H1 (cell line): ENCODE measurements at regions of chr22 and their contacts with region 1.

Region 1: GRCh38 chr22:36028646-36029405 is at the start of gene RBFOX2:
- DNase-seq: peak; percentile 84 to 99
- H3K4me3 ChIP-seq: peak within 1 kb of the TSS; percentile 87 to 95 (median 92)
- H3K27ac ChIP-seq: peak within 1 kb of the TSS; percentile 88; the same call in 1 of the 2 replicates
- H3K4me1 ChIP-seq: peaks cover 0 to 9% (median 6%) of the 10 kb centered on the region in 4 experiments; a peak in 5 of 7 replicates
- H3K27me3 ChIP-seq: no peaks in the 10 kb centered on the region
- CTCF ChIP-seq: no peak
- EP300 ChIP-seq: no peak
- POLR2A ChIP-seq: no peak
- RAD21 ChIP-seq: no peak
- total RNA-seq, gene RBFOX2: 108 and 121 TPM in 2 replicates

Region 2: DNA sequence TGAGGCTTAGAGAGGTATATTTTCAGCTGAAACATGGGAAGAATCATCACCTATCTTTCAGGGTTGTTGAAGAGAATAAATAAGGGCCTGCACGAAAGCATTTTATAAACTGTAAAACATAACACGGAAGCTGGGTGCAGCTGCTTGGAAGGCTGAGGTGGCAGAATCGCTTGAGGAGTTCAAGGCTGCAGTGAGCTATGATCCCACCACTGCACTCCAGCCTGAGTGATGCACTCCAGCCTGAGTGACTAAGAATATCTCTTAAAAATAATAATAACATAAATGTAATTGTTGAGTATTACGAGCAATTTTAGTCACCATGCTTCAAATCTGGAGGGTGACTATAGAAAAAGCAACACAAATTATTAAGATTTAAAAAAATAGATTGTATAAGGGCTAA is 16.5 kb before region 1 on chr22:
- CTCF ChIA-PET with region 1: interaction called, 5 read pairs
- POLR2A ChIA-PET with region 1: interaction called, 44 read pairs
- DNase-seq: no peak
- H3K4me3 ChIP-seq: no peak overlapping the region
- H3K27ac ChIP-seq: no peak overlapping the region
- H3K4me1 ChIP-seq: peaks cover 3 to 17% (median 10%) of the 10 kb centered on the region in 4 experiments; a peak in 6 of 7 replicates
- H3K27me3 ChIP-seq: no peaks in the 10 kb centered on the region
- CTCF ChIP-seq: no peak
- EP300 ChIP-seq: no peak
- POLR2A ChIP-seq: no peak
- RAD21 ChIP-seq: no peak

Region 3: GRCh38 chr22:36017651-36018091 is 11.2 kb before region 1 on chr22:
- CTCF ChIA-PET with region 1: interaction called, 5 read pairs
- POLR2A ChIA-PET with region 1: interaction called, 44 read pairs
- DNase-seq: no peak
- H3K4me3 ChIP-seq: no peak overlapping the region
- H3K27ac ChIP-seq: no peak overlapping the region
- H3K4me1 ChIP-seq: no peaks in the 10 kb centered on the region
- H3K27me3 ChIP-seq: no peaks in the 10 kb centered on the region
- CTCF ChIP-seq: no peak
- EP300 ChIP-seq: no peak
- POLR2A ChIP-seq: no peak
- RAD21 ChIP-seq: no peak